GM10248 (cell line): ENCODE measurements at regions of chr20 and their contacts with region 1.

Region 1: GRCh38 chr20:35092524-35093266 is at the start of gene TRPC4AP:
- DNase-seq: peak; percentile 92
- CTCF ChIP-seq: peak; percentile 95

Region 2: DNA sequence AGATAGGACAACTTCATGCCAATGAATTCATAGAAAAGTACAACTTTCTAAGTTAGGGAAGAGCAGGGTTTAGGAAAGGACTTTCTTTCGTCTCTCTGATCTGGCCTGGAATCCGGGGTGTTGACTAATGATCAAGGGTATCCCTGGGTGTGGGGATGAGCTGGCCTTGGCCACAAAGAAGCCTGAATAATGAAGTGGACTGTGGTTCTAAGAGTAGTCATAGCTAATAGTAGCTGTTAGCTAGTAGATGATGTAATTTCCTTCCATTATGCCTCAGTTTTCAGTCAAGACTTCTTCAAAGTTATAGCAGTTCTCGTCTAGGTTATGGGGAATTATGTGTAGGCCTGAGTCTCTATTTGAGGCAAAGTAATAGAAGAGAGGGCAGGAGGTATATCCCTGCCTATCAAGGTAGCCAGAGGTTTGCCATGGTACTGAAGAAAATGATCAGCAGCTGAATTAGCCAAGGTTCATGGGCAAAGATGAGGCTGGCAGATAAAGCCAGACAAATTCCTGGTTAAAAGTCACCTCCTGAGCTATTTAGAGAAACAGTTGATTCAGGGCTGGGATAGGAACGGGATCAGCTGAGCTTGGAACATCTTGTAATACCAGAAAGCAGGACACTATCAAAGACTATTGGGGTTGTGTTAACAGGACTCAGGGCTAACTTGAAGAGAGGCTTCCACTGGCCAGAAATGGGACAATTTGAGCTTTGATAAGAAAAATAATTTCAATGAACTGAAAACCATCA is 18.6 kb after region 1 on chr20:
- CTCF ChIA-PET with region 1: interaction called, 18 read pairs
- POLR2A ChIA-PET with region 1: interaction called, 5 read pairs
- DNase-seq: no peak
- CTCF ChIP-seq: no peak

Region 3: DNA sequence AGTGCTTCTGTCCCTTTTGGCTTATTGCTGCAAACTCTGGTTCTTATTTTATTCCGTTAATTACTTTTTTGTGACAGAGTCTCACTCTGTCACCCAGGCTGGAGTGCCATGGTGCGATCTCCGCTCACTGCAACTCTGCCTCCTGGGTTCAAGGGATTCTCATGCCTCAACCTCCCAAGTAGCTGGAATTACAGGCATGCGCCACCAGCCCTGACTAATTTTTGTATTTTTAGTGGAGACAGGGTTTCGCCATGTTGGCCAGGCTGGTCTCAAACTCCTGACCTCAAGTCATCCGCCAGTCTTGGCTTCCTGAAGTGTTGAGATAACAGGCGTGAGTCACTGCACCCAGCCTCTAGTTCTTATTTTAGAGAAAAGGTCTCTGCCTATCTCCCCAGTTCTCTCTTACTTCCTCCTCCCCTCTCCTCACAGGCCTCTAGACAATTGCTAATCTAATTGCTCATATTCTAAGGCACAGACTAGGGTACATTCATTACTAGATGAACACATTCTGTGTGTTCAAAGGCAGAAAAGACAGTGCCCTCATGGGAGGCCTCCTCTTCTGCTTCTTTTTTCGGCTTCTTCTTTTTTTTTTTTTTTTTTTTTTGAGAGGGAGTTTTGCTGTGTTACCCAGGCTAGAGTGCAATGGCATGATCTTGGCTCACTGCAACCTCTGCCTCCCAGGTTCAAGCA is 27.5 kb after region 1 on chr20:
- CTCF ChIA-PET with region 1: interaction called, 13 read pairs
- POLR2A ChIA-PET with region 1: interaction called, 5 read pairs
- DNase-seq: no peak
- CTCF ChIP-seq: no peak

Region 4: DNA sequence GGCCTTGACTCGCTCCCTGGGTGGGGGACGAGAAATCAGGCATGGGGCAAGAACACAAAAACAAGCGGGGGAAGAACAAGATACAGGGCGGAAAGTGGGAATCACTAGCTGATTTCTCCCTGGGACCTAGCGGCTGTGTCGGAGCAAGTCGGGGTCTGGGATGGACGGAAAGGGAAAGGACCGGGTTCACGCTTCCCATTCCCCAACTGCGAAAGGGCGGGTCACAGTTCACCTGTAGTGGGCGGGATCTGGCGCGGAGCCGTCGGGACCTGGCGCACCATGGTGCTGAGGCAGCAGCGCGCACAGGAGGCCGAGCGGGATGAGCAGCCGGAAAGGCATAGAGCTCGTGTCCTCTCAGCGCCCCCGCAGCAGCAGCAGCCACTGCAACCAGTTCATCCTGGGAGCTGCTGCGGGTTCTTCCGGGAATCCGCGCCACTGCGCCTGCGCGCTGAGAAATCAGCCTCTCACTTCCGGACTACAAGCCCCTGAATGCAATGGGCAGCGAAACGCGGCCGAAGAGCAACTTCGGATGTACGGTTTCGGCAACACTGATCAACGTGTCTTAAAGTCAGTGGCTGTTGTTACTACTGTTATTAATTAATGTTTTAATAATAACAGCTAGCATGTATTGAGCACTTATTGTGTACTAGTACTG is 54.4 kb after region 1 on chr20 and contains the start of gene EDEM2:
- CTCF ChIA-PET with region 1: interaction called, 24 read pairs
- POLR2A ChIA-PET with region 1: no interaction called
- DNase-seq: peak; percentile 96
- CTCF ChIP-seq: no peak

Region 5: GRCh38 chr20:35207950-35208611 is 115.4 kb after region 1 on chr20:
- CTCF ChIA-PET with region 1: interaction called, 38 read pairs
- POLR2A ChIA-PET with region 1: no interaction called
- DNase-seq: peak; percentile 67
- CTCF ChIP-seq: peak; percentile 62

Region 6: DNA sequence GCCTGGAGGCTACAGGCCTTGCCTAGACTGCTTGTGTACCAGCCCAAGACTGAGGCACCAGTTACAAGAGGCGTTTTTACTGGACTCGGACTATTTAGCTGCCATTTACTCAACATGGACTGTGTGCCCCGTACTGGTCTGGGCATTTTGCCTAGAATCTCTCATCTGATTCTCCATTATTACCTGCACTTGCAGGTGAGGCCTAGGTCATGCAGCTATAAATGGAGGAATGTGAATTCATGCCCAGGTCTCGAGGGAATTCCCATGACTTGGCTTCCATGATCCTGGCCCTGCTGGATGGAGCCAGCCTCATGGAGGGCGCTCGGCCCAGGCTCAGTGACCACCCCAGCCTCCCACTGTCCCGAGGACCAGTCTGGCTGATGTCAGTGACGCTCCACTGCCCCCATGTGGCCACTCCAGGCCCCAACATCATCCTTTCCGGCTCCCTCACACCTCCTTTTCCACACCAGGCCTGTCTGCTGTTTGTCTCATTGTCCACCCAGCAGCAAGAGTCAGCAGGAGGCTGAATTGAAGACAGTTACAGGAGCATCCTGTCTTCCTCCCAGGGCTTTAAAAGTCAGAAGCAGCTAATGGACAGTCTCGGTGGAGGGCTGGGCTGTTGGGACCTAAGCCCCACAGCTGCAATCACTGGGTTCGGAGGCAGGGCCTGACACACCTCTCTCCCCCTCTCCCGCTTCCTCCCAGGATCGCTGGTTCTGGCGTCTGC is 176.5 kb after region 1 on chr20:
- CTCF ChIA-PET with region 1: interaction called, 10 read pairs
- POLR2A ChIA-PET with region 1: no interaction called
- DNase-seq: peak; percentile 82
- CTCF ChIP-seq: peak; percentile 74